Natural killer cell (primary cell): ENCODE measurements at regions of chr2 and their contacts with region 1.

Region 1: GRCh38 chr2:136238286-136239078 is 120.5 kb upstream of the CXCR4 start:
- DNase-seq: peak; percentile 33 to 81
- ATAC-seq: peak; percentile 61 to 85 (median 77)
- H3K4me3 ChIP-seq: no peak overlapping the region
- H3K4me3 Mint-ChIP-seq: peak overlapping the region; percentile 11
- H3K27ac ChIP-seq: peak overlapping the region; percentile 94
- H3K27ac Mint-ChIP-seq: peak overlapping the region; percentile 93 to 97
- H3K4me1 ChIP-seq: peaks cover 43% of the 10 kb centered on the region
- H3K4me1 Mint-ChIP-seq: peaks cover 54 to 63% of the 10 kb centered on the region in 2 donors
- H3K27me3 ChIP-seq: no peaks in the 10 kb centered on the region
- H3K27me3 Mint-ChIP-seq: peaks cover 0 to 3% of the 10 kb centered on the region in 2 donors
- CTCF ChIP-seq: no peak

Region 2: DNA sequence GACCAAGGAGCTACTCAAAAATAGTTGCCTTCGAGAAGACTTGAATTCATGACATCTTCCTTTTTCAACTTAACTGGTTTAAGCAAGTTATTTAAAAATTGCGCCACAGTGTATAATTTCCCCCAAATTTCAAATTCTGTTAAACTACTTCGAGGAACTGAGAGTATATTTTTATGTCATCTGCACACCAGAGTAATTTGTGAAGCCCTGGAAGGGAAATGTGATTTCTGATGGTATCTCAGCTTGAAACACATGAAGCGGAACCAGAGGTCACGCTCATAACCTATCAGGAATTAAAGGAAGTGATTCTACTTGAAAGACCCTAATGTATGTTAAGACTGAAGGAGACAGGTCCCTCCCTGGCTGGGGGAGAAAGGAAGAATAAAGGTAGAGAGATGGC is 219.2 kb before region 1 on chr2:
- intact Hi-C with region 1: no loop called
- DNase-seq: no peak
- ATAC-seq: no peak
- H3K4me3 ChIP-seq: no peak overlapping the region
- H3K4me3 Mint-ChIP-seq: no peak overlapping the region
- H3K27ac ChIP-seq: no peak overlapping the region
- H3K27ac Mint-ChIP-seq: no peak overlapping the region
- H3K4me1 ChIP-seq: peaks cover 3% of the 10 kb centered on the region
- H3K4me1 Mint-ChIP-seq: peaks cover 14% of the 10 kb centered on the region in 2 donors
- H3K27me3 ChIP-seq: no peaks in the 10 kb centered on the region
- H3K27me3 Mint-ChIP-seq: peaks cover 0 to 10% of the 10 kb centered on the region in 2 donors
- CTCF ChIP-seq: no peak

Region 3: GRCh38 chr2:136129601-136130000 is 108.9 kb before region 1 on chr2:
- intact Hi-C with region 1: loop called (anchors 2 kb)
- DNase-seq: peak in 1 of 2 donors; percentile 91
- ATAC-seq: peak; percentile 48 to 72 (median 69)
- H3K4me3 ChIP-seq: no peak overlapping the region
- H3K4me3 Mint-ChIP-seq: peak overlapping the region; percentile 75
- H3K27ac ChIP-seq: peak overlapping the region; percentile 90
- H3K27ac Mint-ChIP-seq: peak overlapping the region; percentile 93 to 99
- H3K4me1 ChIP-seq: peaks cover 86% of the 10 kb centered on the region
- H3K4me1 Mint-ChIP-seq: peaks cover 54 to 81% of the 10 kb centered on the region in 2 donors
- H3K27me3 ChIP-seq: no peaks in the 10 kb centered on the region
- H3K27me3 Mint-ChIP-seq: peaks cover 3 to 6% of the 10 kb centered on the region in 2 donors
- CTCF ChIP-seq: no peak

Region 4: DNA sequence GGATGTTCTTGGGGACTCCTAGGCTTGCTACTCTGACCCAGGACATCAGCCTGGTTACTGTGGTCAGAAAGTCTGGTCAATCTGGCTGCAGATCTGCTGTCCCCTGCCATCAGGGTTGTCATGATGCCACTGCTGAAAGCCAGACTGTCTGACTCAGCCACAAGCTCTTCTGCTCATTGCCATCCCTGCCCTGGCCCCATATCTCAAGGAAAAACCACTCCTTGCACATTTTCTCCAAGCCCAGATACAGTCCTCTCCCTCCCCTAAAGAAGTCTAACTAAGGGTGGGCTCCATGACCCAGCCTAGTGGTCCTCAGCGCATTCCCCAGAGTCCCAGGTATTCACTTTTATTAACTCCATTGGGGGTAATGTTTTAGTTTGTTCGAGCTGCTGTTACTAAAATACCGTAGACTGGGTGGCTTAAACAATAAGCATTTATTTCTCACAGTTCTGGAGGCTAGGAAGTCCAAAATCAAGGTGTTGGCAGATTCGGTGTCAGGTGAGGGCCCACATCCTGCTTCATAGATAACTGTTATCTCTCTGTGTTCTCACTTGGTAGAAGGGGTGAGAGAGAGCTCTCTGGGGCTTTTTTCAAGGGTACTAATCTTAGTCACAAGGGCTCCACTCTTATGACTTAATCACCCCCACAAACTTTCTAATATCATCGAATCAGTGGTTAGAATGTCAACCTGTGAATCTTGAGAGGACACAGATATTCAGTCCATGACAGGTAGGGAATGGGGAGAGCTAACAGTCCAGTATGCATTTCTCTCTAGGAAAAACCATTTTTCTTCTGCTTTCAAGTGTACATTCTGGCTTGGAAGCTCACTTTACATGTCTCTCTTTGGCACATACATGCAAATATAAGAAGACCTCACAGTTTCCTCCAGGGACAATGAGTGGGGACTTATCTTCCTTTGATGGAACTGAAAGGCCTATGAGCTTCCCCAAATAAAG is 25.8 kb before region 1 on chr2:
- intact Hi-C with region 1: loop called (anchors 2 kb)
- DNase-seq: peak; percentile 23 to 71
- ATAC-seq: peak; percentile 66 to 86 (median 79)
- H3K4me3 ChIP-seq: no peak overlapping the region
- H3K4me3 Mint-ChIP-seq: peak overlapping the region; percentile 41
- H3K27ac ChIP-seq: peak overlapping the region; percentile 58
- H3K27ac Mint-ChIP-seq: peak overlapping the region; percentile 83
- H3K4me1 ChIP-seq: peaks cover 42% of the 10 kb centered on the region
- H3K4me1 Mint-ChIP-seq: peaks cover 31 to 40% of the 10 kb centered on the region in 2 donors
- H3K27me3 ChIP-seq: no peaks in the 10 kb centered on the region
- H3K27me3 Mint-ChIP-seq: peaks cover 3 to 17% of the 10 kb centered on the region in 2 donors
- CTCF ChIP-seq: no peak

Region 5: GRCh38 chr2:136281281-136282114 is 43.0 kb after region 1 on chr2:
- intact Hi-C with region 1: loop called (anchors 2 kb)
- DNase-seq: peak; percentile 46 to 91
- ATAC-seq: peak; percentile 85 to 91 (median 85)
- H3K4me3 ChIP-seq: no peak overlapping the region
- H3K4me3 Mint-ChIP-seq: peak overlapping the region; percentile 13
- H3K27ac ChIP-seq: peak overlapping the region; percentile 66
- H3K27ac Mint-ChIP-seq: peak overlapping the region; percentile 91 to 92
- H3K4me1 ChIP-seq: peaks cover 35% of the 10 kb centered on the region
- H3K4me1 Mint-ChIP-seq: peaks cover 28 to 29% of the 10 kb centered on the region in 2 donors
- H3K27me3 ChIP-seq: no peaks in the 10 kb centered on the region
- H3K27me3 Mint-ChIP-seq: no peaks in the 10 kb centered on the region
- CTCF ChIP-seq: no peak

Region 6: GRCh38 chr2:137775521-137775920 is 1537.0 kb after region 1 on chr2:
- intact Hi-C with region 1: no loop called
- DNase-seq: no peak
- ATAC-seq: no peak
- H3K4me3 ChIP-seq: no peak overlapping the region
- H3K4me3 Mint-ChIP-seq: no peak overlapping the region
- H3K27ac ChIP-seq: no peak overlapping the region
- H3K27ac Mint-ChIP-seq: no peak overlapping the region
- H3K4me1 ChIP-seq: no peaks in the 10 kb centered on the region
- H3K4me1 Mint-ChIP-seq: no peaks in the 10 kb centered on the region
- H3K27me3 ChIP-seq: no peaks in the 10 kb centered on the region
- H3K27me3 Mint-ChIP-seq: no peaks in the 10 kb centered on the region
- CTCF ChIP-seq: no peak